ENCODE measurements at regions of chr21 and their contacts with region 1.

Region 1: GRCh38 chr21:45074048-45074817 is at the start of gene ADARB1:
- DNase-seq: peak; percentile 24 to 87 (median 63)
- ATAC-seq: peak; percentile 55
- H3K4me3 ChIP-seq: peak within 1 kb of the TSS; percentile 58 to 69
- H3K4me3 Mint-ChIP-seq: peak within 1 kb of the TSS; percentile 95
- H3K27ac ChIP-seq: peak within 1 kb of the TSS; percentile 36 to 68
- H3K27ac Mint-ChIP-seq: peak within 1 kb of the TSS; percentile 92
- H3K4me1 ChIP-seq: peaks cover 38% of the 10 kb centered on the region
- H3K4me1 Mint-ChIP-seq: peaks cover 41% of the 10 kb centered on the region
- H3K27me3 ChIP-seq: no peaks in the 10 kb centered on the region
- H3K27me3 Mint-ChIP-seq: no peaks in the 10 kb centered on the region
- CTCF ChIP-seq: no peak
- total RNA-seq, gene ADARB1: 21.1 to 22.6 TPM

Region 2: DNA sequence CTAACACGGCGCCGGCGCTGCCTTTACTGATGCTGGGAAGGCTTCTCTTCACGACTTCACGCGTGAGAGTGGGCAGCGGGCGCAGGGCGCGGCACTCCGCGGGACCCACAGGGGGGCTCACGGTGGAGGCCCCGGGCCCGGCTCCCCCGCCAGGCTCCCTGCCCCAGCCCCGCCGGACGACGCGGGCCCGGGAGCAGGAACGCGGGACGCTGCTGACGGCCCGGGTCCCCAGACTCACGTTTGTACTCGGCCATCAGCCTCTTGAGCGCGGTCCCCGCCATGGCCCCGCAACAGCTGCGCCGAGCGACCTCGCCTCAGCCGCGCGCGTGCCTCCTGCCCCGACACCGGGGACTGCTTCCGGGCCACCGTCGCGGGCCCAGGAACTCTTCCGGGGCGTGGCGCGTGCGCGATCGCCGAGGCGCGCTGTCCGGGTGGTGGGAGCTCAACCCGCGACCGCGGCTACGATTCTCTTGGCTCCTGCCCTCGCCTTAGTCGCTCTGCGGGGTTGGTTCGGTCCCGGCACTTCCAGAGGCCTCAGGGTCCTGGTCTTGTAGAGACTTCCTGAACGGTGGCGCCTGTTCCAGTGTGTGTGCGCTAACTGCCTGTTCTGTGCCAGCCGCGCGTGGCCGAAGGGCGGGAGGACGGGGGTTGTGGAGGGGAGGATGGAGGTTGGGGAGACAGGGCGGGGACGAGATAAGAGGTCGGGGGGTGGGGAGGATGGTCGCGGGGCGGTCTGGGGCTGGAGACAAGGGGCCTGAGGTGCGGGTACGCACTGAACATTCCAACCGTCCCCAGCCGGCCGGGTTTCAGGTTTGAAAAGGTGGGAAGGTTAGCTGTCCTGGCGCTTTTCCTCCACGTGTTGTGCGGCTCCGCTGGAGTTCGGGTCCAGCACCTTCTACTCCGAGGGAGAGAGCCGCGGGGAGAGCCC is 272.5 kb before region 1 on chr21 and contains the start of gene UBE2G2:
- CTCF ChIA-PET with region 1: no interaction called
- POLR2A ChIA-PET with region 1: no interaction called
- intact Hi-C with region 1: loop called in 1 of 2 experiments (anchors 10 kb)
- DNase-seq: peak; percentile 70 to 91 (median 85)
- ATAC-seq: peak; percentile 88
- H3K4me3 ChIP-seq: peak within 1 kb of the TSS; percentile 76 to 95
- H3K4me3 Mint-ChIP-seq: peak within 1 kb of the TSS; percentile 95
- H3K27ac ChIP-seq: peak within 1 kb of the TSS; percentile 64 to 71
- H3K27ac Mint-ChIP-seq: peak within 1 kb of the TSS; percentile 92
- H3K4me1 ChIP-seq: peaks cover 20% of the 10 kb centered on the region
- H3K4me1 Mint-ChIP-seq: peaks cover 47% of the 10 kb centered on the region
- H3K27me3 ChIP-seq: no peaks in the 10 kb centered on the region
- H3K27me3 Mint-ChIP-seq: no peaks in the 10 kb centered on the region
- CTCF ChIP-seq: peak; percentile 52
- total RNA-seq, gene UBE2G2: 88.8 to 89.1 TPM

Region 3: GRCh38 chr21:44962403-44962966 is 111.7 kb before region 1 on chr21:
- CTCF ChIA-PET with region 1: no interaction called
- POLR2A ChIA-PET with region 1: no interaction called
- intact Hi-C with region 1: no loop called
- DNase-seq: no peak
- ATAC-seq: no peak
- H3K4me3 ChIP-seq: no peak overlapping the region
- H3K4me3 Mint-ChIP-seq: no peak overlapping the region
- H3K27ac ChIP-seq: no peak overlapping the region
- H3K27ac Mint-ChIP-seq: no peak overlapping the region
- H3K4me1 ChIP-seq: peaks cover 30% of the 10 kb centered on the region
- H3K4me1 Mint-ChIP-seq: peaks cover 30% of the 10 kb centered on the region
- H3K27me3 ChIP-seq: no peaks in the 10 kb centered on the region
- H3K27me3 Mint-ChIP-seq: no peaks in the 10 kb centered on the region
- CTCF ChIP-seq: no peak

Region 4: GRCh38 chr21:45109831-45110492 is 35.7 kb after region 1 on chr21:
- CTCF ChIA-PET with region 1: no interaction called
- POLR2A ChIA-PET with region 1: interaction called, 3 read pairs
- intact Hi-C with region 1: loop called (anchors 1 to 5 kb)
- DNase-seq: peak in 5 of 9 experiments; percentile 33 to 73 (median 52)
- ATAC-seq: peak; percentile 76
- H3K4me3 ChIP-seq: peak overlapping the region; percentile 43 to 51
- H3K4me3 Mint-ChIP-seq: peak overlapping the region; percentile 81
- H3K27ac ChIP-seq: peak overlapping the region; percentile 14 to 59
- H3K27ac Mint-ChIP-seq: peak overlapping the region; percentile 76
- H3K4me1 ChIP-seq: peaks cover 35% of the 10 kb centered on the region
- H3K4me1 Mint-ChIP-seq: peaks cover 62% of the 10 kb centered on the region
- H3K27me3 ChIP-seq: no peaks in the 10 kb centered on the region
- H3K27me3 Mint-ChIP-seq: no peaks in the 10 kb centered on the region
- CTCF ChIP-seq: no peak

Region 5: DNA sequence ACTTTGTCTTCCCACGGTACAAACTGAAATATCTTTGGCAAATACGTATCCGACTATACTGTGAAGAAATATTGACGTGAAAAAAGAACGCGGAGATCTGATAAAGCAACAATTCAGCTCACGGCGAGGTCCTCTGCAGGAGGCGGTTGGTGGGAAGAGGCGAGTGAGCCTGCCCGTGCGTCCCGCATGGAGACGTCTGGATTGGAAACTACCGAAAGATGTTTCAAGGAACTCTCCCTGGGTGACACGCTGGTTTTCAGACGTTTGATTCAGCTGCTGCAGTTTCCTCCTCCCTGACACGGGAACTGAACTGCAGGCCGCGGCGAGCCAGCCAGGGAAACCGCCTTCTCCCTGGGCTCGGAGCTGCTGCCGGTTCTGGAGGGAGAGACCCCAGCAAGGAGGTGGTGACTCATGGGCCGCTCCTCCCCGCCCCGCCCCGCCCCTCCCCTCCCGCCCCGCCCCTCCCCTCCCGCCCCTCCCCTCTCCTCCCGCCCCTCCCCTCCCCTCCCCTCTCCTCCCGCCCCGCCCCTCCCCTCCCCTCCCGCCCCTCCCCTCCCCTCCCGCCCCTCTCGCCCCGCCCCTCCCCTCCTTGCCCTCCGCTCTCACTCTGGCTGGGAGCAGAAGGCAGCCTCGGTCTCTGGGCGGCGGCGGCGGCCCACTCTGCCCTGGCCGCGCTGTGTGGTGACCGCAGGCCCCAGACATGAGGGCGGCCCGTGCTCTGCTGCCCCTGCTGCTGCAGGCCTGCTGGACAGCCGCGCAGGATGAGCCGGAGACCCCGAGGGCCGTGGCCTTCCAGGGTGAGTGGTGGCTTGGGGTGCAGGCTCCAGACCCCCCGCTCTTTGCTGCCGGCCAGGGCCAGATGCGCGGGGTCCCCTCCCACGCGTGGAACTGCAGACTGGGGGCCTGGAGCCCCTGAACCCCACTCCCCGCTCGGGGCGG is 907.2 kb after region 1 on chr21 and contains the start of gene COL6A1:
- CTCF ChIA-PET with region 1: no interaction called
- POLR2A ChIA-PET with region 1: no interaction called
- intact Hi-C with region 1: loop called in 1 of 2 experiments (anchors 5 kb)
- DNase-seq: peak in 8 of 9 experiments; percentile 38 to 80 (median 70)
- ATAC-seq: peak; percentile 78
- H3K4me3 ChIP-seq: peak within 1 kb of the TSS; percentile 42 to 54
- H3K4me3 Mint-ChIP-seq: peak within 1 kb of the TSS; percentile 61
- H3K27ac ChIP-seq: no peak within 1 kb of the TSS
- H3K27ac Mint-ChIP-seq: no peak within 1 kb of the TSS
- H3K4me1 ChIP-seq: peaks cover 17% of the 10 kb centered on the region
- H3K4me1 Mint-ChIP-seq: peaks cover 6% of the 10 kb centered on the region
- H3K27me3 ChIP-seq: peaks cover 0 to 11% of the 10 kb centered on the region in 2 experiments
- H3K27me3 Mint-ChIP-seq: peaks cover 3% of the 10 kb centered on the region
- CTCF ChIP-seq: no peak
- total RNA-seq, gene COL6A1: 15.2 to 16.5 TPM